HEK293 (cell line): ENCODE measurements at regions of chr10 and their contacts with region 1.

Region 1: GRCh38 chr10:99732033-99732912 is at the starts of genes COX15 and CUTC:
- H3K4me3 ChIP-seq: peak within 1 kb of the TSS; percentile 99
- H3K27ac ChIP-seq: peak within 1 kb of the TSS; percentile 61
- H3K4me1 ChIP-seq: no peaks in the 10 kb centered on the region
- CTCF ChIP-seq: peak; percentile 84

Region 2: GRCh38 chr10:99742701-99743100 is 10.4 kb after region 1 on chr10:
- CTCF ChIA-PET with region 1: interaction called, 9 read pairs
- POLR2A ChIA-PET with region 1: interaction called, 13 read pairs
- H3K4me3 ChIP-seq: no peak overlapping the region
- H3K27ac ChIP-seq: no peak overlapping the region
- H3K4me1 ChIP-seq: no peaks in the 10 kb centered on the region
- CTCF ChIP-seq: no peak